ENCODE measurements at regions of chr11 and their contacts with region 1.

Region 1: DNA sequence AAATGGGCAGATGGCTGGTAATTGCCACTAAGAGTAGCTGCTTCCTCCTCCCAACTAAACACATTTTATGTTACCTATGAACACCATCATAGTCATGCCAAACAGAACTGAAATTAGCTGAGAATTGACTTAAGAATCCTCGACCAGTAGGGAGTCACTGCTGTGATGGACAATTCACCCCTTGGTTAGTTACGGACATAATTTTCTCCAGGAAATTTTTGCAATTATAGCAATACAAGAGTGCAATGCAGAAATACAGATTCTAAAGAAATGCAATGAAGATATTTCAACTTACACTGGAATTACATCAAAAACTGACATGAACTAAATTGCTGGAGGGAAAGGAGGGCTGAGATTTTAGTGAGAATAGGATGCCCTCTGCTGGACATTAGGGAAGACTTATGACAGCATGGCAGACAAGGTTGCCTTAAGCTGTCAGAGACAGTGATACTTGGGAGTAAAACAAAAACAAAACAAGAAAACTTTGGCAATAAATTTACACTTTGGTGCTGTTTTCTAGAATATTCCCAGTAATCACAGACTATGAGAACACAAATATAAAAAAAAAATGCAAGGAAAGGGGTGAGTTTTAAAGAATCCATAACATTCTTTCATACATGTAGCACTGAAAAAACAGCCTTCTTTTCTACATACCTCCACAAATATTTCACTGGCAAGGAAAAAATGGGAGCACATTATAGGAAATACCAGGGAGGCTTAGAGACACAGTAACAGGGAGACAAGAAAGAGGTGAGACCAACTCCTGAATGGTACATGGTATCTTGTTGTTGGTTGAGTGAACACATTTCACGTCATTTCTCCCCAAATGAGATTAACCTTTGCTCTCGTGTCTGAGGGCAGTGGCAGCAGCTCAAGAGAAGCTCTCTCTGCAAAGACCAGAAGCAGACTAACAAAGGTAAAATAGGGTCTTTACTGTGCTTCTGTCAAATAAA is 11.2 kb upstream of the PPP2R1B start:
- DNase-seq: peak; percentile 18
- ATAC-seq: peak; percentile 88
- H3K4me3 Mint-ChIP-seq: no peak overlapping the region
- H3K27ac Mint-ChIP-seq: no peak overlapping the region
- H3K4me1 Mint-ChIP-seq: no peaks in the 10 kb centered on the region
- H3K27me3 Mint-ChIP-seq: no peaks in the 10 kb centered on the region

Region 2: DNA sequence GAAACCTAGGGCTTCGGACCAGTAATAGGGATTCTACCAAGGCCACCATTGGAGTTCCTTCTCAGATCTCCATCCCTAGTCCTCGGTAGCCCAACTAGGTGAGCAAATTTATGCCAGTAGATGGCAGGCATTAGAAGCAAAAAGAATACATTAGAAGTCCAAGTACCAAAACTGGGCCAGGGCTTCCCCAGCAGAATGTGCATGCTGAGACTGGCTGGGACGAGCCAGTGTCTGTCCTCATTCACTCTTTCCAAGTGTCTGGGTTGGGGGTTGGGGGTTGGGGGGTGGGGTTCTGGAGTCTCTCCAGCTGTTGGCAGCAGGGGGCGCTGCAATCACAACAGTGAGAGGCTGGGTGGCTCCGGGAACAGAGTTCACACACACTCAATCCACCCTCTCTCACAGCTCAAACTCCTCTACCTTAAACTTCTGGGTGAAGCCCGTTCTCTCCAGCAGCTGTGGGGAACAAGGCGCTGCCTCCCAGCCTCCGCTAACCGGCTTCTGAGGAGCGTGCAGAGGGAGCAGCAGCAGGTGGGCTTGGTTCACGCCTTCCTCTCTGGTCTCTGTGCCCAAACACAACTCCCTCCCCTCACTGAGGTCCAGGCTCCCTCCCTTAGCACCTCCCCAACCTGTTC is 322.7 kb before region 1 on chr11:
- CTCF ChIA-PET with region 1: interaction called, 3 read pairs
- POLR2A ChIA-PET with region 1: no interaction called
- intact Hi-C with region 1: loop called (anchors 1 kb)
- DNase-seq: peak; percentile 88
- ATAC-seq: peak; percentile 93
- H3K4me3 Mint-ChIP-seq: no peak overlapping the region
- H3K27ac Mint-ChIP-seq: no peak overlapping the region
- H3K4me1 Mint-ChIP-seq: no peaks in the 10 kb centered on the region
- H3K27me3 Mint-ChIP-seq: peaks cover 4% of the 10 kb centered on the region

Region 3: DNA sequence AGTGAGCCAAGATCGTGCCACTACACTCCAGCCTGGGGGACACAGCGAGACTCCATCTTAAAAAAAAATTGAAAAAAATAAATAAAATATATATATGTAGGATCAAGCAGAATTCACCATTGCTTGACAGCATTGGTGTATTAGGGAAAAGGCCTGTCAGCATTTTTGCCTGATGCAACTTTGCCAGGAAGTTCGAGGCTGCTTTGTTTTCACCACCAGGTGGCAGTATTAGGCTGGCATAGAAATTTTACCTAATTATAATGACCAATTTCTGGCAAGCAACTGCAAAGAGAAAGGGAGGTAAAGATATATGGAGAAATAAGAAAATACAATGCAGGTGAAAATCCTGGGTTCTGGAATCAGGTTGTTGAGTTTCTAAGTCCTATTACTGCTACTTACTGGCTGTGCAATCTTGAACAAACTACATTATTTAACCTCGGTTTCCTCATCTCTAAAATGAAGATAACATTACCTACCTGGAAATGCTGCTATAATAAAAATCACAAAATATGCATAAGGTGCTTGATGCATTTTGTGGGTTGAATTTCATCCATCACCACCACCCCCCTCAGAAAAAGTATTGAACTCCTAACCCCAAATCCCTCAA is 212.2 kb before region 1 on chr11:
- CTCF ChIA-PET with region 1: interaction called, 13 read pairs
- POLR2A ChIA-PET with region 1: no interaction called
- intact Hi-C with region 1: loop called (anchors 1 kb)
- DNase-seq: peak; percentile 76
- ATAC-seq: peak; percentile 44
- H3K4me3 Mint-ChIP-seq: no peak overlapping the region
- H3K27ac Mint-ChIP-seq: no peak overlapping the region
- H3K4me1 Mint-ChIP-seq: no peaks in the 10 kb centered on the region
- H3K27me3 Mint-ChIP-seq: no peaks in the 10 kb centered on the region

Region 4: DNA sequence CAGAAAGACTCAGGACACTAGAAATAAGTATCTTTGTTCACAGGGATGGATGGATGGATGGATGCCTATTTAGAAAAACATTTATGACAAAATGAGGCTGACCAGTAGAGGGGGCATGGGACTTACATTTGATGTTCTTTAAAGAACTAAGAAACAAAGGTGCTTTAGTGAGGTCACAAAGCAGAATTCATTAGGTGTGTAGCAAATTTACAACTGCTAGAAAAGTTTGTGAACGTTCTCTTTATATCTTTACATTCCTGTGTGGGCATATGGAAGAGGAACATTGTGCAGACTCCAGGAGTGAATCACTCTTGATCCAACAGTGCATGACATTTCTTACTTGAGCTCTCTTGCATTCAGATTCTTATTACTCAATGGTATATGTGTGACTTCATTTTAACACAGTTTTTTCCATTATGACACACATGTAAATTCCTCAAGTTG is 191.0 kb before region 1 on chr11:
- CTCF ChIA-PET with region 1: interaction called, 39 read pairs
- POLR2A ChIA-PET with region 1: no interaction called
- intact Hi-C with region 1: loop called (anchors 1 kb)
- DNase-seq: peak; percentile 57
- ATAC-seq: peak; percentile 33
- H3K4me3 Mint-ChIP-seq: no peak overlapping the region
- H3K27ac Mint-ChIP-seq: no peak overlapping the region
- H3K4me1 Mint-ChIP-seq: no peaks in the 10 kb centered on the region
- H3K27me3 Mint-ChIP-seq: no peaks in the 10 kb centered on the region

Region 5: DNA sequence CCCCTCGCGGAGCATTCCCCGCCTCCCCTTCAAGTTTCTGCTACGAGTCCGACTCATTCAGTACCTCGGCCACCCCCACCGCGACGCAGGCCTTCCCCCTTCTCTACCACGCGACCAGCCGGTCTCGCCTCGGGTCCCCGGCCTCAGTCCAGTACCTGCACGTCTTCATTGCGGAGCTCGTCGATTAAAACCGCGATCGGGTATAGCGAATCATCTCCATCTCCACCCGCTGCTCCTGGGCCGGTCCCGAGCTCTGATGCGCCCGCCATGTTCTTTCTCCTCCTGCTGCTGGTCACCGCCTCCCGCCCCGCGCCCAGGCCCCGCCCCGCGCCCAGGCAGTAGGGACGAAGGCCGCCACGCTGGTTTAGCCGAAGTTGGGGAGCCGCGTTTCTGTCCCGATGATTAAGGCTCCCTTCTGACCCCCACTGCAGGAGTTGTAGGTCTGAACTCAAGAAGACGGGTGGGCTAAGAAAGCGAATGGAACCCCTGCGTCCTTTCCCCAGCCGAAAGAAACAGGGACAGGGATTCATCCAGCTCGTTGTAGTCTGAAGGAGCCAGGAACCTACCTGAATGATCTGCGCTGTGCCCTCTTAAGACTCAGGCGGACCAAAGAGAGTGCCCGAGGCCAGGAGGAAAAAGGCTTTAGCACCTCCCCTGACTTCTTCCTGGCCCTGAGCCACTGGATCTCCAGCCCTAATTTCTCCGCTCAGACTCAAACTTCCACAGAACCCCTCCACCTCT is 11.1 kb before region 1 on chr11 and contains the start of gene PPP2R1B:
- CTCF ChIA-PET with region 1: interaction called, 55 read pairs
- POLR2A ChIA-PET with region 1: interaction called, 3 read pairs
- intact Hi-C with region 1: no loop called
- DNase-seq: peak; percentile 85
- ATAC-seq: peak; percentile 95
- H3K4me3 Mint-ChIP-seq: peak within 1 kb of the TSS; percentile 85
- H3K27ac Mint-ChIP-seq: peak within 1 kb of the TSS; percentile 98
- H3K4me1 Mint-ChIP-seq: peaks cover 32% of the 10 kb centered on the region
- H3K27me3 Mint-ChIP-seq: no peaks in the 10 kb centered on the region
- total RNA-seq, gene PPP2R1B: 39.1 to 53.9 TPM

Region 6: DNA sequence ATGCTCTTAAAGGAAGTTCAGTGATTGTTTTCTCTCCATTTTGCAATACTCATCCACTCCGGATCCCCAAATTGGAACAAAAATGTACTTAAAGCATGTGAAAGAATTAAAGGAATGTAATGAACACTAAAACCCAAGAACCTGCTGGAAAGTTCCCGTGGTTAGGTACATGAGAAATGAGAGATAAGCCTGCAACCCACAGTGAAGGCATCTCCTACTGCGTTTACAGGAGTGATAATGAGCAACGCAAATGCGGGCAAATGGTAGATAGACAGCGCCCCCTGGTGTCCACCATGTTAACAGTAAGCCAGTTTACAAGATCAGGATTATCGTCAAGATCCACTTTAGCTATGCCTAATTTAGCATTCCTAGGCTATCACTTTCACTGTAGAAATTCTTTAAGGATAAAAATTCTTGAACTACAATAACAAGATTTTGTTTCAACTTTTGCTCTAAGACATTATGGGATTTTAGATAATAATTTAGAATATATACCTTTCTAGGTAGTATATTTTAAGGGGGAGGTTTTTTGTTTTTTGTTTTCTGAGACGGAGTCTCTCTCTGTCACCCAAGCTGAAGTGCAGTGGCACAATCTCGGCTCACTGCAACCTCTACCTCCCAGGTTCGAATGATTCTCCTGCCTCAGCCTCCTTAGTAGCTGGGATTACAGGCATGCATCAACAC is 64.1 kb after region 1 on chr11:
- CTCF ChIA-PET with region 1: interaction called, 13 read pairs
- POLR2A ChIA-PET with region 1: no interaction called
- intact Hi-C with region 1: loop called (anchors 2 to 5 kb)
- DNase-seq: peak; percentile 94
- ATAC-seq: peak; percentile 95
- H3K4me3 Mint-ChIP-seq: no peak overlapping the region
- H3K27ac Mint-ChIP-seq: no peak overlapping the region
- H3K4me1 Mint-ChIP-seq: peaks cover 9% of the 10 kb centered on the region
- H3K27me3 Mint-ChIP-seq: no peaks in the 10 kb centered on the region

Region 7: DNA sequence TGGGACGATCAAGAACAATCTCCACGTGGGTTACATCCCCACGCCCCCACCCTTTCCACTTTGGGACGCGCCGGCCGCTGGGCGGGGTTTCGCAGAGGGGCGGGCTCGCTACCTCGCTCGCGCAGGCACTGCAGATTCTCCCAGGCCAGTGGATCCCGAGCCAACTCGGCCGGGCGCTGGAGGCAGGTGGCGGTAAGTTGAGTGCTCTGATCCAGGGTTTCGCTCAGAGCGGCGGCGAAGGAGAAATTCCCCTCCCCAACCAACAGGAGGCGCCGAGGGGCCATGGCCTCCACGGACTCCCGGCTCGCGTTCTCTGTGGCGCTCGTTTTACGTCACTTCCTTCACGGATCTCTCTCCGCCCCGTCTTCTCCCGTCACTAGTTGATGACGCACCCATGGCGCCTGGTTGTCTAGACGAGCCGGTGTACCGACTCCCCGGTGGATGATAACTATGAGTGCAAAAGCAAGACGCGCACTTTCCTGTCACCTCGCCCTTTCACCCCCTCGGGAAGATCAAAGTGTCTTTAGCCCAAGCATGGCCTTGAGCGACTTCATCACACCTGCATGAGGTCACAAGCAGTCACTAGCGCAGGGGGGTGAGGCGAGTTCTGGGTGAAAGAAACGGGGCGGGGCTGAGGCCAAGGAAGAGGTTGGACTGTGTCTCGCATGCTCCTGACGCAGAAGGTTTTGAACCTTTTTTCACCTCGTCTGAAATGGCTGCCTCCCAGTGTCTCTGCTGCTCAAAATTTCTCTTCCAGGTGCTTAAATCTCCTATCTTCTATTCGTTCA is 101.7 kb after region 1 on chr11 and contains the starts of genes CFAP68 and FDXACB1:
- CTCF ChIA-PET with region 1: no interaction called
- POLR2A ChIA-PET with region 1: no interaction called
- intact Hi-C with region 1: no loop called
- DNase-seq: peak; percentile 97
- ATAC-seq: peak; percentile 92
- H3K4me3 Mint-ChIP-seq: peak within 1 kb of the TSS; percentile 78
- H3K27ac Mint-ChIP-seq: peak within 1 kb of the TSS; percentile 96
- H3K4me1 Mint-ChIP-seq: peaks cover 26% of the 10 kb centered on the region
- H3K27me3 Mint-ChIP-seq: no peaks in the 10 kb centered on the region
- total RNA-seq, gene CFAP68: 32.1 to 49.7 TPM
- total RNA-seq, gene FDXACB1: 5.9 to 6.0 TPM